PC-9 (cell line): ENCODE measurements at regions of chr18 and their contacts with region 1.

Region 1: DNA sequence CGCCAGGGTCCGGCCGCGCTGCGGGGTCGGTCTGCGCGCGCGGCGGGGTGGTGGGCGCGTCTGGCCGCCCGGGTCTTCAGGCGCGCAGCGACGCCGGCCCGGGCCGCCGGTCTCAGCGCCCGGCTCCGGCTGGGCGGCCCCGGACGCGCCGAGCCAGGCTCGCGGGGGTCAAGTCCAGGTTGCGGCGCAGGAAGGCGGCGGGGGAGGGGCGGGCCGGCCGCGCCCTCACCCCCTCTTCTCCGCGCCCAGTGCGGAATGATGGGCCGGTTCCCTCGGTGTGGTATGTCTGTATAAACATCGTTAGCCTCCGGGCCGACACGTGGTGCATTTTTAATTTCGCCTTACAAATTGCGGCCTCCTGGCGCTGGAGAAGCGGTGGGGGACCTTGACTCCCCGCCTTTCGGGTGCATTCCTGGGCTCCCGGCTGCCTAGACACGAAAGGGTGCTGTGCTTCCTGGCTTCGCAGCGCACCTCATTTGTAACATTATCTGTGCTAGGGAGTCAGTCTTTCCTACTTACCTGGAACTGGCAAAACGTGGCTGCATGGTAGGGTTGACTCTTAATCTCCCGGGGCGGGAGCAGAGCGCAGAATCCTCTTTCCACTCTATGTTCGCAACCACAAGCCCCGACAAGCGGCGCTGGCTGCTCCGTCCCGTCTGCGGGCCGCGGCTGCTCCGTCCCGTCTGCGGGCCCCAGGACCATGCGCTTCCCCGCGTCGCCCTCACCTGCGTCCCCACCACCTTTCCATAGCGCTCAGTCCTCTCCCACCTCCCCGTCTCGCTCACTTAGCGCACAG is 69.0 kb downstream of the CTAGE1 start:
- DNase-seq: peak; percentile 81
- H3K4me3 ChIP-seq: peak overlapping the region; percentile 60
- H3K27ac ChIP-seq: peak overlapping the region; percentile 87
- H3K4me1 ChIP-seq: peaks cover 40% of the 10 kb centered on the region
- H3K27me3 ChIP-seq: no peaks in the 10 kb centered on the region
- CTCF ChIP-seq: no peak

Region 2: DNA sequence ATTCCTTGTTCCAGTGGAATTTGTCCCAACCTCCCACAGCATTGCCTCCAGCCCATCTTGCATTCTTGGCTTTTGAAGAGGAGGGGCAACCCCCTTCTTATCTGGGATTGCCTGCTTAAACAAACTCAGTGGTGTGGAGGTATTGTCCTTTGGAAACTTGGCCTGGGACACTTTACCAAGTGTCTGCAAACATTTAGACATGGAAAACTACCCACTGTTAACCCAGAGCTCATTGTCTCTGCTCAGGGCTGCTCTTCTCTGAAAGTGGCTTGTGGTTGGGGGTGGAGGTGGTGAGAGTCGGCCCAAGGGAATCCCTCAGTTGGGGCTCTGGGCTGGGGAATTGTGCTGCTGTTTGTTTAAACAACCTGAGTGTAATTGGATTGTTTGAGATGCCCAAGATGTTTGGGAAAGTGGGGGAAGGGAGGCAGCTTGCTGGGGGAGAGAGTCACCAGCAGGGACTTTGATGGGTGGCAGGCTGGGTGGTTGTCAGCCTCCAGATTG is 357.6 kb before region 1 on chr18:
- CTCF ChIA-PET with region 1: no interaction called
- POLR2A ChIA-PET with region 1: no interaction called
- intact Hi-C with region 1: loop called (anchors 5 kb)
- DNase-seq: peak in 1 of 2 experiments; percentile 18
- H3K4me3 ChIP-seq: no peak overlapping the region
- H3K27ac ChIP-seq: no peak overlapping the region
- H3K4me1 ChIP-seq: no peaks in the 10 kb centered on the region
- H3K27me3 ChIP-seq: no peaks in the 10 kb centered on the region
- CTCF ChIP-seq: no peak

Region 3: GRCh38 chr18:22174341-22175145 is 174.2 kb before region 1 on chr18:
- CTCF ChIA-PET with region 1: interaction called, 3 read pairs
- POLR2A ChIA-PET with region 1: no interaction called
- intact Hi-C with region 1: loop called (anchors 2 kb)
- DNase-seq: no peak
- H3K4me3 ChIP-seq: 0 out of 2 replicates have a peak overlapping the region, but pooled peaks have one; percentile 14
- H3K27ac ChIP-seq: no peak overlapping the region
- H3K4me1 ChIP-seq: peaks cover 33% of the 10 kb centered on the region
- H3K27me3 ChIP-seq: no peaks in the 10 kb centered on the region
- CTCF ChIP-seq: no peak

Region 4: GRCh38 chr18:22300665-22301636 is 47.8 kb before region 1 on chr18:
- CTCF ChIA-PET with region 1: no interaction called
- POLR2A ChIA-PET with region 1: no interaction called
- intact Hi-C with region 1: loop called (anchors 2 kb)
- DNase-seq: peak; percentile 54 to 71
- H3K4me3 ChIP-seq: no peak overlapping the region
- H3K27ac ChIP-seq: peak overlapping the region; percentile 45; the same call in 1 of the 2 replicates
- H3K4me1 ChIP-seq: peaks cover 14% of the 10 kb centered on the region
- H3K27me3 ChIP-seq: no peaks in the 10 kb centered on the region
- CTCF ChIP-seq: no peak

Region 5: GRCh38 chr18:22667616-22668422 is 319.1 kb after region 1 on chr18:
- CTCF ChIA-PET with region 1: no interaction called
- POLR2A ChIA-PET with region 1: no interaction called
- intact Hi-C with region 1: loop called (anchors 10 kb)
- DNase-seq: peak; percentile 53 to 82
- H3K4me3 ChIP-seq: no peak overlapping the region
- H3K27ac ChIP-seq: peak overlapping the region; percentile 60
- H3K4me1 ChIP-seq: peaks cover 17% of the 10 kb centered on the region
- H3K27me3 ChIP-seq: no peaks in the 10 kb centered on the region
- CTCF ChIP-seq: no peak